ENCODE measurements at regions of chr2 and their contacts with region 1.

Region 1: DNA sequence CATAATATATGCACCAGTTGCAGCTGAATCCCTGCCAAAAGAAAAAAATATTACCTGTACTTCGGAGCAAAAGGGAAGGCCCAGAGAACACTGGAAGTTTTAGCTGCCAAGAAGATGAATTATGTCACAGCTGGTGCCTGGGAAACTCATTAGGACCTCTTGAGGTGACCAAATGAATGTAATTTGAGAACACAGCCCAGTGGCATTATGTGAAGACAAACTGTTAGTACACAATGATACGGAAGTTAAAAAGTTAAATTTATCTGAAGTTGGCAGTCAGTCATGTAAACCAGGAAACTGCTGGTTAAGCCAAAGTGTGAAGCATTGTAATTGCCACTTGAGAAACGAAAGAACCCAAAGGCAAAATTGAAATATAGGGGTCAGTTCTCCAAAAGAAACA is 80.7 kb downstream of the EML4 start:
- DNase-seq: no peak
- ATAC-seq: no peak
- H3K4me3 ChIP-seq: no peak overlapping the region
- H3K27ac ChIP-seq: no peak overlapping the region
- H3K4me1 ChIP-seq: no peaks in the 10 kb centered on the region
- H3K27me3 ChIP-seq: no peaks in the 10 kb centered on the region
- CTCF ChIP-seq: no peak
- EP300 ChIP-seq: no peak
- POLR2A ChIP-seq: no peak
- RAD21 ChIP-seq: no peak

Region 2: GRCh38 chr2:42147641-42148274 is 102.1 kb before region 1 on chr2:
- CTCF ChIA-PET with region 1: no interaction called
- POLR2A ChIA-PET with region 1: no interaction called
- RAD21 ChIA-PET with region 1: no interaction called
- SMC1A ChIA-PET with region 1: no interaction called
- in situ Hi-C with region 1: no loop called
- intact Hi-C with region 1: no loop called
- DNase-seq: no peak
- ATAC-seq: no peak
- H3K4me3 ChIP-seq: no peak overlapping the region
- H3K27ac ChIP-seq: no peak overlapping the region
- H3K4me1 ChIP-seq: no peaks in the 10 kb centered on the region
- H3K27me3 ChIP-seq: no peaks in the 10 kb centered on the region
- CTCF ChIP-seq: no peak
- EP300 ChIP-seq: no peak
- POLR2A ChIP-seq: no peak
- RAD21 ChIP-seq: no peak

Region 3: GRCh38 chr2:42238644-42239288 is 11.1 kb before region 1 on chr2:
- CTCF ChIA-PET with region 1: interaction called, 10 read pairs
- POLR2A ChIA-PET with region 1: no interaction called
- RAD21 ChIA-PET with region 1: no interaction called
- SMC1A ChIA-PET with region 1: interaction called, 5 read pairs
- in situ Hi-C with region 1: no loop called
- intact Hi-C with region 1: no loop called
- DNase-seq: no peak
- ATAC-seq: peak; percentile 94
- H3K4me3 ChIP-seq: no peak overlapping the region
- H3K27ac ChIP-seq: no peak overlapping the region
- H3K4me1 ChIP-seq: no peaks in the 10 kb centered on the region
- H3K27me3 ChIP-seq: no peaks in the 10 kb centered on the region
- CTCF ChIP-seq: peak; percentile 22 to 55 (median 29); a peak in 4 of 6 replicates
- EP300 ChIP-seq: no peak
- POLR2A ChIP-seq: no peak
- RAD21 ChIP-seq: peak; percentile 84

Measured in GM12878 (cell line).